Cardiac septum (tissue), 1 donor: ENCODE measurements at regions of chr9 and their contacts with region 1.

Region 1: GRCh38 chr9:94805585-94805984 is 79.1 kb downstream of the AOPEP start:
- DNase-seq: no peak

Region 2: GRCh38 chr9:94822273-94822672 is 16.7 kb after region 1 on chr9:
- intact Hi-C with region 1: loop called (anchors 2 kb)
- DNase-seq: no peak

Region 3: GRCh38 chr9:94860968-94861871 is 55.6 kb after region 1 on chr9:
- intact Hi-C with region 1: no loop called
- DNase-seq: no peak

Region 4: DNA sequence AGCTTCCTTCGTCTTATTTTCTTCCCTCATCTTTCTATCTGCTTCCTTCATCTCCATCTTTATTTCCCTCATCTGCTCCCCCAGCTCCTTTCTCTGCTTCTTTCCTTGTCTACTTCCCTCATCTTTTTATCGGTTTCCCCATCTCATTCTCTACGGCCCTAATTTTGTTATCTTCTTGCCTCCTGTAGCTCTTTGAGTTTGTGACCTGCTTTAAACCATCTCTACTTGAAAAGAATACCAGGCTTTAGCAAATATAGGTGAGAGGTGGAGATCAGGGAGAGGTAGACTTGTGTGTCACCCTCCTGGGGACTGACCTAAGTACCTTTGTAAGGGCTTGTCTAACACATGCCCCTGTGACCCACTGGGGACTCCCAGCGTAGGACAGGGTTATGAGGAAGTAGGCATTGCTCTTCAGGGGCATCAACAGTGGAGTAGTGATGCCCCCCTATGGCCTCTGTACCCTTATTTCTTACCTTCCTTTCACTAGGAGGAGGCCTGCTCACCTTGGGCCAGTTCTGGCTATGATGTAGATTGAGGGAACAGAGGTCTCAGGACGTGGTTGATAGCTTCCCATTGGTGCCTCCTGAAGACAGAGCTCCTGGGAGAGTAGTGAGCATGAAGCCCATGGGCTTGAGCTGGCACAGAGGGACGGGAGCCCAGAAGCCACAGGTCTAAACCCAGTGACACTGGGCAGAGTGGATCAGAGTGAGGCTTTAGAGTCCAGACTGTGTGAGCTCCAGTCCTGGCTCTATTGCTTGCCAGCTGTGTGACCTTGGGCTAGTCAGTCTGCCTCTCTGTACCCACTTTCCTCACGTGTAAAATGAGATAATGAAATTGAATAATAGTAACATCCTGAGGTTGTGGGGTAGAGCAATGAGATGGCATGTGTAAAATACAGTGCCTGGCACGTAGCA is 112.5 kb after region 1 on chr9:
- intact Hi-C with region 1: loop called (anchors 5 kb)
- DNase-seq: no peak